ENCODE measurements at regions of chr6 and their contacts with region 1.

Region 1: GRCh38 chr6:28634761-28635546 is 109.3 kb downstream of the GPX5 start:
- H3K4me3 ChIP-seq: peak overlapping the region; percentile 47
- H3K27ac ChIP-seq: peak overlapping the region; percentile 35
- H3K4me1 ChIP-seq: no peaks in the 10 kb centered on the region
- CTCF ChIP-seq: no peak

Region 2: DNA sequence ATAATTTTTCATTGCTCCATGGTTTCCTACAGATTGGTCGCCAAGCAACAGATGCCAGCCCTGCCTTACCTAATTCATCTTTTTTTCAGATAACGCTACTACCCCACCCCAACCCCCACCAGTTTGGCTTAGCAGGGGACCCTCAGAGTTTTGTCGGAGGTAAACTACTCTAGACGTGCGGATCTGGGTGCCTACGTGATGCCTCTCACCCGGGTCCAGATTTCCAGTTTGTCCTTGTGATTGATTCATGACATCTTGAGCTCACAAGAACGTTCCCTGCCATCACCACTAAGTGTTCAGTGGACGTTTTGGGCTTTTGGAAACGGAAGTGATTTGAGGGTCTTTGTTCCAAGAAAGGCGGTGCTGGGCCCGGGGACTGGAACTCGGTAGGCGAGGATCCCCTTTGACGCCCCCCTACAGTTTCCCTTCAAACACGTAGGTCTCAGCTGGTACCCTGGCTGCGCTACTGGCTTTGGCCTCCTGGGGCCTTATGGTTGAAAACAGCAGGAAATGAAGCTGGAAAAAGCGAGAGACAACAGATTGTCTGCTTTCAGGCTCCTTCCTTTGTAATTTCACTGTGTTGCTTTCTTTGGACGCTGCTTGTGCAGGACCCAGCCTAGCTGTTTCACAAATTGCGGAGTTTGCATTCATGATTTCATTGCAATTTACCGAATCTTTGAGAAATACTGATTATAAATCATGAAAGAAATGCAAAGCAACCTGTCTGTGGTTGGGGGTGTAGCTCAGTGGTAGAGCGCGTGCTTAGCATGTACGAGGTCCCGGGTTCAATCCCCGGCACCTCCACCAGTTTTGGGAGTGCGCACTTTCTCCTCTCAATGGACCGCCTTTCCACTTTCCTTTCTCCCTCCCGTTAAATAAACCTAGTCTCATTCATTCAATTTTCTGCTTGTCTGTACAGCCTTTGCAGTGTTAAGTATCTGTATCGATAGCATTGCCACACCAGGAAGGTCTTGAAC is 28.2 kb before region 1 on chr6:
- CTCF ChIA-PET with region 1: interaction called, 4 read pairs
- POLR2A ChIA-PET with region 1: interaction called, 11 read pairs
- H3K4me3 ChIP-seq: peak overlapping the region; percentile 43
- H3K27ac ChIP-seq: peak overlapping the region; percentile 71
- H3K4me1 ChIP-seq: peaks cover 5% of the 10 kb centered on the region; the same call in 1 of the 2 replicates
- CTCF ChIP-seq: peak; percentile 59; the same call in 1 of the 2 replicates

Region 3: GRCh38 chr6:28648035-28648877 is 13.3 kb after region 1 on chr6:
- CTCF ChIA-PET with region 1: interaction called, 3 read pairs
- POLR2A ChIA-PET with region 1: interaction called, 12 read pairs
- H3K4me3 ChIP-seq: peak overlapping the region; percentile 58
- H3K27ac ChIP-seq: peak overlapping the region; percentile 72
- H3K4me1 ChIP-seq: peaks cover 21% of the 10 kb centered on the region
- CTCF ChIP-seq: no peak